RWPE1 (cell line): ENCODE measurements at regions of chr12 and their contacts with region 1.

Region 1: DNA sequence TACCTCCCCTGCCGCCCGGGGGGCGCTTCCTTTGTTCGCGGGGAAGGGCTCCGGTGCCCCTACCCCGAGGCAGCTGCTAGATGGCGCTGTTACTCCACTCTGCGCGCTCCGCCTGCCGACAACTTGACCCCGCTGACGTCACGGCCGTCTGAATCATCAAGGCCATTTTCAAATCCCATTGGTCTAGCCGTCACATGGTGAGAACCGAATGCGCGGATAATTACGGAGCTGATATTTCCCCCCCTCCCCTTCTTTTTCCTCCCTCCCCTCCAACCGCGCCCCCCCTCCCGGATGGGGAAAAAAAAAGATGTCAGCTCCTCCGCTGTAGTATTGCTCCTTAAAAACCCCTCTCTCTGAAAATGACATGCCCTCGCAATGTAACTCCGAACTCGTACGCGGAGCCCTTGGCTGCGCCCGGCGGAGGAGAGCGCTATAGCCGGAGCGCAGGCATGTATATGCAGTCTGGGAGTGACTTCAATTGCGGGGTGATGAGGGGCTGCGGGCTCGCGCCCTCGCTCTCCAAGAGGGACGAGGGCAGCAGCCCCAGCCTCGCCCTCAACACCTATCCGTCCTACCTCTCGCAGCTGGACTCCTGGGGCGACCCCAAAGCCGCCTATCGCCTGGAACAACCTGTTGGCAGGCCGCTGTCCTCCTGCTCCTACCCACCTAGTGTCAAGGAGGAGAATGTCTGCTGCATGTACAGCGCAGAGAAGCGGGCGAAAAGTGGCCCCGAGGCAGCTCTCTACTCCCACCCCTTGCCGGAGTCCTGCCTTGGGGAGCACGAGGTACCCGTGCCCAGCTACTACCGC is at the start of gene HOXC10:
- DNase-seq: peak; percentile 93
- H3K27ac ChIP-seq: no peak within 1 kb of the TSS
- CTCF ChIP-seq: peak; percentile 69

Region 2: GRCh38 chr12:54201001-54201794 is 216.1 kb after region 1 on chr12:
- CTCF ChIA-PET with region 1: interaction called, 25 read pairs
- POLR2A ChIA-PET with region 1: no interaction called
- DNase-seq: peak; percentile 73
- H3K27ac ChIP-seq: no peak overlapping the region
- CTCF ChIP-seq: peak; percentile 92